Activated T-helper 2 cell treated with anti-CD3 and anti-CD28 coated beads, Interferon-gamma antibody, Interleukin-2, Interleukin-4, amounts not matched to agents 10 μg/mL and 5 μg/mL and 100 μg/mL, durations not matched to agents 14 hours and 24 hours and 36 hours (primary cell): ENCODE measurements at regions of chr20 and their contacts with region 1.

Region 1: DNA sequence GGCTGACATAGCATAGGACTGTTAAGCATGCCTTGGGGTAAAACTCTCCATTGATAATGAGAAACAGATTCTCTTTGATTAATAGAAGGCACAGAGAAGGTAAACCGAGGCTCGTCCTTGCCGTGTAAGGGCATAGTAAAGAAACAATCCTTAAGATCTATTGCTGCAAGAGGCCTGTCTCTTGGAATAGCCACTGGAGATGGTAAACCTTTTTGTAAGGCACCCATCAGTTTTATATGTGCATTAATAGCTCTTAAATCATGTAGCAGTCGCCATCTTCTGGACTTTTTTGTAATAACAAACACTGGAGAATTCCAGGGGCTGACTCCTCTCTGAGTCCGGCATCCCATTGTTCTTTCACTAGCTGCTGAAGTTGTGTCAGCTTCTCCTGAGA is 8.4 kb upstream of the ABHD12 start:
- DNase-seq: no peak
- H3K4me3 Mint-ChIP-seq: no peak overlapping the region
- H3K27ac Mint-ChIP-seq: no peak overlapping the region
- H3K4me1 Mint-ChIP-seq: peaks cover 5% of the 10 kb centered on the region
- H3K27me3 Mint-ChIP-seq: peaks cover 9% of the 10 kb centered on the region

Region 2: DNA sequence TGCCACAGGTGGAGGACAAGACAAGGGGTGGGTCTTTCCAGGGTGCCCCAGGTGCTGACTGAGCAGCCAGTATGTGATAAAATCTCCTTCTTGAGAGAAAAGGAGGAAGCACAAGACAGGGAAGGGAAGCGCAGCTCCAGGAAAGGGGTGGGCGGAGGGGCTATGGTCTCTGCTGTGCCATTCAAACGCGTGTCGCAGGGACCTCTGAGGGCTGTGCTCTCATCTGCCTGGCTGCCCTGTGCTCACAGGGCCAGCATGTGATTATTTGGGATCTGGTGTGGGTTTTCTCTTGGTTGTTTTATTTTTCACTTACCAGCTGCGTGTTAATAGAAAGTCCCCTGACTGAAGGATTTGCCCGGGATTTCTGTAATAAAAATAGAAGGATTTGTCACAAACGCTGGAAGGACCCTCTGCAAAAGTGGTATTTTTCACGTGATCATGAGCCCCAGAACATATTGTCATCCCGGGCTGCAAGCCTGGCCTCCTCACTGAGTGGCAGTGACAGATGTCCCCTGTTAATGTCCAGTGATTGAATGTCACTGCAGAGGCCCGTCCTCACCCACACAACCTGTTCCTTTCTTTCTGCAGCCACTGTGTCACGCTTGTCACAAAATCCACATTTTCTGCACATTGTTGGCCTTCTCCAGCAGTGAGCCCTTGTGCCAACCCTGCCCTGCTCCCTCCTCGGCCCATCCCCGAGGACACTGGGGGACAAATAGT is 282.1 kb before region 1 on chr20:
- intact Hi-C with region 1: no loop called
- DNase-seq: no peak
- H3K4me3 Mint-ChIP-seq: no peak overlapping the region
- H3K27ac Mint-ChIP-seq: no peak overlapping the region
- H3K4me1 Mint-ChIP-seq: no peaks in the 10 kb centered on the region
- H3K27me3 Mint-ChIP-seq: peaks cover 14% of the 10 kb centered on the region

Region 3: DNA sequence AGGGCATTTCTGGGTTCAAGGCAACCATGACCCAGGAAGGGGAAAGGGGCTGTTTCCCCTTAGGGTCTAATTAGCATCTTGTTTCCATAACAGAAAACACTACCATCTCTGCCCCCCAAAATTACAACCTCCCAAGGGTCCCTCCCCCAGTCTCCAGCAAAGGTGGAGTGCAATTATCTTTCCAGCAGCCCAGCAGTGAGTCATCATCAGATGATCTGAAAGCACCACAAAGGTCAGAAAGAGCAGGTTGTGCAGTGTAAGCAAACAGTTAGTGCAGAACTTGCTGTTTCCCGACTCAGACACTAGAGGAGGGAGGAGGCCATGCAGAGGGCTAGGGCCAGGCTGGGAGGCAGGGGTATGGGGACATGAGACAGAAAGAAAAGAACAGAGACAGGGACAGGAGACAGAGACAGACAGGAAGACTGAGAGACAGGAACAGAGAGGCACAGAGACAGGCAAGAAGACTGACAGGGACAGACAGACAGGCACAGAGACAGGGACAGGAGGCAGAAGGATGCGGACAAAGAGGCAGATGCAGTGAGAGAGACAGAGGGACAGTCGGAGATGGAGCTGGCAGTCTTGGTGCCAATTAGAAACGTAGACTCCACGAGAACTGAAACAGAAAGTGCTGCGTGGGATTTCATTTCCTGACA is 88.6 kb before region 1 on chr20:
- intact Hi-C with region 1: loop called (anchors 2 kb)
- DNase-seq: peak; percentile 59
- H3K4me3 Mint-ChIP-seq: peak overlapping the region; percentile 74
- H3K27ac Mint-ChIP-seq: peak overlapping the region; percentile 95
- H3K4me1 Mint-ChIP-seq: peaks cover 36% of the 10 kb centered on the region
- H3K27me3 Mint-ChIP-seq: no peaks in the 10 kb centered on the region

Region 4: GRCh38 chr20:25605148-25605547 is 206.1 kb after region 1 on chr20:
- intact Hi-C with region 1: no loop called
- DNase-seq: no peak
- H3K4me3 Mint-ChIP-seq: no peak overlapping the region
- H3K27ac Mint-ChIP-seq: no peak overlapping the region
- H3K4me1 Mint-ChIP-seq: peaks cover 19% of the 10 kb centered on the region
- H3K27me3 Mint-ChIP-seq: no peaks in the 10 kb centered on the region